K562 (cell line): ENCODE measurements at regions of chr17 and their contacts with region 1.

Region 1: DNA sequence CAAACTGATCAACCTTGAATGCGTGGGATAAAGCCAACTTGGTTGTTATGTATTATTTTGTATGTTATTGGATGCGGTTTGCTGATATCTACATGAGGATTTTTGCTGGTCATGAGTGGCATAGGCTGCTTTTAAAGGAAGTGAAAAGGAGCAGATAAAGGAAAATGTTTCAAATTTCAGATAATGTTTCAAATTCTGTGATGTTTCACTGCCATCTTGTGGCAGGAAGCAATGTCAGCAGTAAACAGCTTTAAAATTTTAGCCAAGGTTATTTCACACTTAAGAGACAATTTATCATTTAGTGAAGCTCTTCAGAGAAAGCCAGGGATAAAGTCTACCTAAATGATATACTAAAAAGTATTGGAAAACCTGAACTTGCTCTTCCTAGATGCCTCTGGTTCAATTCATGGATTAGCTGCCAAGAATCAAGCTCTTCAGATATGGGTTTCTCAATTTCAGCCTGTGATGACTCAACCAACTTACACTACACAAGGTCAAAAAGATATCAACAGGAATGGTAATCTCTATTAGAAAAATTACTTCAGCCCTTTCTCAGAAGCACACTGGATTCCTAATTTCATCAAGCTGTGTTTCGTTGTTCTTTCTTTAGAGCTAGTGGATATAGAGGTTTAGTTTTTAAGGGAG is 136.0 kb upstream of the C17orf78 start:
- DNase-seq: peak in 2 of 4 experiments; percentile 20 to 30
- ATAC-seq: peak; percentile 38; the same call in 2 of the 3 replicates
- H3K4me3 ChIP-seq: no peak overlapping the region
- H3K27ac ChIP-seq: peak overlapping the region; percentile 44; the same call in 1 of the 3 replicates
- H3K4me1 ChIP-seq: peaks cover 0 to 8% of the 10 kb centered on the region in 2 experiments; a peak in 1 of 5 replicates
- H3K27me3 ChIP-seq: no peaks in the 10 kb centered on the region
- CTCF ChIP-seq: peak in 2 of 3 experiments; percentile 60 to 72; a peak in 5 of 6 replicates
- EP300 ChIP-seq: no peak
- POLR2A ChIP-seq: no peak
- RAD21 ChIP-seq: peak; percentile 59 to 63

Region 2: DNA sequence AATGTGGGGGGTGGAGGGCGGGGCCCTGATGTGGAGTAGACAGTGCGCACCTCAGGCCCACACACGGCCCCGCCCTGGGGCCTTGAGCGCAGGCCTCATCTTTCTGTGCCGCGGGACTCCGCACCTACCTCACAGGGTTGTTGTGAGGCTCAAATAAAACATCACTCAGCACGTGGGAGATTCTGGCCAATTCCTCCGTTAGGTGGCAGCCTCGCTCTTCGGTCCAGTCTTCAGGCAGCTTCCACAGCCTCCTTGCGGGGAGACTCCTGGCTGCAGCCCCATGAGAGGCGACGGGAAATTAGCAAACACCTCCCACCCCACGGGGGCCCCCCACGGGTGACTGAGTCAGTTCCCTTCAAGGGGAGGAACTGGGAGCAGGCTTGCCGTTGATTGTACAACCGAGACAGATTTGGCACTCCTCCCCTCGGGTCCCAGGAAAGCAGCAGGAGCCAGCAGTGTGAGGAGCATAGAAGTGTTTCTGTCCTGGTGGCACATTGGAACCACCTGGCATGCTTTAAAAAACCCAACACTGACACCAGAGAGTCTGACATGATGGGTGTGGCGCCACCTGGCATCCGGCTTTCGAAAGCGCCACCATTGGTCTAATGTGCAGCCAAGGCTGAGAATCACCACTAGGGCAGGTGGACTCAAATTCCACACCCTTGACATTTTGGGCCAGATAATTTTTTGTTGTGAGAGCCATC is 630.9 kb before region 1 on chr17:
- CTCF ChIA-PET with region 1: no interaction called
- POLR2A ChIA-PET with region 1: interaction called, 3 read pairs
- in situ Hi-C with region 1: loop called (anchors 10 kb)
- intact Hi-C with region 1: no loop called
- DNase-seq: peak; percentile 72 to 89 (median 74)
- ATAC-seq: peak; percentile 88
- H3K4me3 ChIP-seq: no peak overlapping the region
- H3K27ac ChIP-seq: no peak overlapping the region
- H3K4me1 ChIP-seq: peaks cover 32 to 42% of the 10 kb centered on the region in 2 experiments; a peak in 4 of 5 replicates
- H3K27me3 ChIP-seq: no peaks in the 10 kb centered on the region
- CTCF ChIP-seq: peak; percentile 82 to 98 (median 90)
- EP300 ChIP-seq: no peak
- POLR2A ChIP-seq: 0 out of 2 replicates have a peak, but pooled peaks have one; percentile 8
- RAD21 ChIP-seq: peak; percentile 35 to 71